A673 (cell line): ENCODE measurements at regions of chr7 and their contacts with region 1.

Region 1: GRCh38 chr7:129401967-129402860 is 32.0 kb upstream of the STRIP2 start:
- DNase-seq: peak; percentile 23
- H3K4me3 ChIP-seq: no peak overlapping the region
- H3K27ac ChIP-seq: no peak overlapping the region
- H3K4me1 ChIP-seq: peaks cover 13% of the 10 kb centered on the region
- H3K27me3 ChIP-seq: no peaks in the 10 kb centered on the region
- CTCF ChIP-seq: peak; percentile 39

Region 2: GRCh38 chr7:129054438-129055293 is 347.5 kb before region 1 on chr7 and contains the start of gene TNPO3:
- CTCF ChIA-PET with region 1: no interaction called
- POLR2A ChIA-PET with region 1: no interaction called
- intact Hi-C with region 1: no loop called
- DNase-seq: peak; percentile 97
- H3K4me3 ChIP-seq: peak within 1 kb of the TSS; percentile 81
- H3K27ac ChIP-seq: peak within 1 kb of the TSS; percentile 94
- H3K4me1 ChIP-seq: peaks cover 9% of the 10 kb centered on the region
- H3K27me3 ChIP-seq: no peaks in the 10 kb centered on the region
- CTCF ChIP-seq: no peak
- total RNA-seq, gene TNPO3: 72.7 and 77.8 TPM in 2 replicates

Region 3: DNA sequence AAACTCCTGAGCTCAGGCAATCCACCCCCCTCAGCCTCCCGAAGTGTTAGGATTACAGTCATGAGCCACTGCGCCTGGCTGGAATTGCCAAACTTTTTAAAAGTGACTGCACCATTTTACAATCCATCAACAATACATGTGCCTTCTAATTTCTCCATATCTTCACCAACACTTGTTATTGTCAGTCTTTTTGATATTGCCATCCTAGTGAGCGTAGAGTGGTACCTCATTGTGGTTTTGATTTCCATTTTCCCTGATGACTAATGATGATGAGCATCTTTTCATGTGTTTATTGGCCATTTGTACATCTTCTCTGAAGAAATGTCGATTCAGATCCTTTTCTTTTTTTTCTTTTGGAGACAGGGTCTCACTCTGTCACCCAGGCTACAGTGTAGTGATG is 10.3 kb after region 1 on chr7:
- CTCF ChIA-PET with region 1: no interaction called
- POLR2A ChIA-PET with region 1: interaction called, 15 read pairs
- intact Hi-C with region 1: no loop called
- DNase-seq: no peak
- H3K4me3 ChIP-seq: no peak overlapping the region
- H3K27ac ChIP-seq: no peak overlapping the region
- H3K4me1 ChIP-seq: no peaks in the 10 kb centered on the region
- H3K27me3 ChIP-seq: no peaks in the 10 kb centered on the region
- CTCF ChIP-seq: no peak

Region 4: DNA sequence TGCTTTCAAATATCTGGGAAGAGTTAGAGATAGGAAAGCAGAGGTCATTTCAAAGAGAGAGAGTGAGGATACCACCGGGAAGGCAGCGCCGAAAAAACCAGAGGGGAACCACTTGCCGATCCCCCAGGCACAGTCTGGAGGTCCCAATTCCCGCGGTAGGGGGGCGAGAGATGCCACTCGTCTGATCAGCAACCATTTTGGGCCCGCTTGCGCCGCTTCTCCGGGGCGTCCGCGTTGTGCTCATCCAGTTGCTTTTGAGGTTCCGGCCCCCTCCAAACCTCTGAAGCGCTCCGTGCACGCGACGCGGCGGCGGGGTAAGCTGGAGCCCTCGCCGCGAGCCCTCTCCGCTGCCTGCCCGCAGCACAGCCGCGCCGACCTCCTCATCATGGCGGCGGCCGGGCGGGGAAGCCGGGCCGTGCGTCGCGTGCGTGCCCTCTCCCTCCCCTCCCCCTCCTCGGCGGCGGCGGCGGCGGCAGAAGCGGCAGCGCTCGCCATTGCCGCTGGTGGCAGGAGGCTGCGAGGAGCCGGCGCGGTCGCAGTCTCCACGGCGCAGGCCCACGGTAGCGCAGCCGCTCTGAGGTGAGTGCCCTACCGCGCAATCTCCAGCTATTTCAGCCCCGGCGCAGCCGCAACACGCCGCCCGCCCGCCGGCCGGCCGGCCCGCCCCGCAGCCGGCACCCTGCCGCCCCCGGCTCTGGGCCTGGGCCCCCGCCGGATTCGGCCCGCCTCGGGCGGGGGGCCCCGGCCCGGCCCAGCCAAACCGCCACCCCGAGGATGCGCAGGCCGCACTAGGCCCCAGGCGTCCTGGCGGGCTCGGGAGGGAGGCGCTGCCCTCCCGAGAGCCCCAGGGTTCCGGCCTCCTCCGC is 209.3 kb after region 1 on chr7 and contains the start of gene NRF1:
- CTCF ChIA-PET with region 1: no interaction called
- POLR2A ChIA-PET with region 1: no interaction called
- intact Hi-C with region 1: no loop called
- DNase-seq: peak; percentile 93
- H3K4me3 ChIP-seq: peak within 1 kb of the TSS; percentile 82
- H3K27ac ChIP-seq: peak within 1 kb of the TSS; percentile 96
- H3K4me1 ChIP-seq: peaks cover 17% of the 10 kb centered on the region
- H3K27me3 ChIP-seq: no peaks in the 10 kb centered on the region
- CTCF ChIP-seq: no peak
- total RNA-seq, gene NRF1: 28.7 and 30.2 TPM in 2 replicates